ENCODE measurements at regions of chr2 and their contacts with region 1.

Region 1: DNA sequence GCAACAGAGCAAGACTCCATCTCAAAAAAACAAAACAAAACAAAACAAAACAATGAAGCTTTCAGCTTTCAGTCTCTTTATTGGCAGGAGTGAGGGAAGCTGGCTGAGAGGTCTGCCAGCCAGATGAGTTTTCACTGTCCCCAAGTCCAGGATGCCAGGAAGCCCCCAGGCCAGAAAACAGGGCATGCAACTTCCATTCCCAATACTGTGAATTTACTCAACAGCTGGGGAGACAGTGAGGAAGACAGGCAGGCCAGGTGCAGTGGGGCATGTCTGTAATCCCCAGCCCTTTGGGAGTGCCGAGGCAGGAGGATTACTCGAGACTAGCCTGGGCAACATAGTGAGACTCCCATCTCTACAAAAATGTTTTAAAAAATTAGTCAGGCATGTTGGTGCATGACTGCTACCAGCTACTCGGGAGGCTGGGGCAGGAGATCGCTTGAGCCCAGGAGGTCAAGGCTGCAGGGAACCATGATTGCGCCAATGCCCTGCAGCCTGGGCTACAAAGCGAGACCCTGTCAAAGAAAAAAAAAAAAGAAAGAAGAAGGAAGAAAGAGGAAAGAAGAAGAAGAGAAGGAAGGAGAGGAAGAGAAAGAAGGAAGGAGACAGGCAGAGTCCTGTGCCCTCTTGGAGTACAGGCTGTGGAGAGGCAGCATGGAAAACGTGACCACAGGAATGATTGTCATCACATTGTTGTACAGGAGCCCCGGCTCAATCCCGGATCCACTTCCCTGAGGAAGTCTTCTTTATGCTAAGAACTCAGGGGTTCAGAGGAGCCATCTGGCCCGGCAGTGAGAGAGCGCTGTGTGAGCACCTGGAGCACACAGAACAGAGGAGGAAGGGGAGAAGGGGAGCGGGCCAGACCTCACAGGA is 29.2 kb upstream of the POMC start:
- DNase-seq: peak in 1 of 2 donors; percentile 45
- ATAC-seq: no peak
- H3K4me3 ChIP-seq: no peak overlapping the region
- H3K27ac ChIP-seq: no peak overlapping the region
- H3K4me1 ChIP-seq: no peaks in the 10 kb centered on the region
- H3K27me3 ChIP-seq: no peaks in the 10 kb centered on the region

Region 2: GRCh38 chr2:24971536-24972314 is 225.8 kb before region 1 on chr2 and contains the start of gene DNAJC27:
- intact Hi-C with region 1: loop called in 1 of 2 experiments (anchors 2 kb)
- DNase-seq: peak; percentile 99
- ATAC-seq: peak; percentile 98
- H3K4me3 ChIP-seq: peak within 1 kb of the TSS; percentile 56 to 80
- H3K27ac ChIP-seq: peak within 1 kb of the TSS; percentile 98
- H3K4me1 ChIP-seq: no peaks in the 10 kb centered on the region
- H3K27me3 ChIP-seq: no peaks in the 10 kb centered on the region
- total RNA-seq, gene DNAJC27: 6.7 to 7.3 TPM

Measured in aorta (tissue), 5 donors.